ENCODE measurements at regions of chr6 and their contacts with region 1.

Region 1: DNA sequence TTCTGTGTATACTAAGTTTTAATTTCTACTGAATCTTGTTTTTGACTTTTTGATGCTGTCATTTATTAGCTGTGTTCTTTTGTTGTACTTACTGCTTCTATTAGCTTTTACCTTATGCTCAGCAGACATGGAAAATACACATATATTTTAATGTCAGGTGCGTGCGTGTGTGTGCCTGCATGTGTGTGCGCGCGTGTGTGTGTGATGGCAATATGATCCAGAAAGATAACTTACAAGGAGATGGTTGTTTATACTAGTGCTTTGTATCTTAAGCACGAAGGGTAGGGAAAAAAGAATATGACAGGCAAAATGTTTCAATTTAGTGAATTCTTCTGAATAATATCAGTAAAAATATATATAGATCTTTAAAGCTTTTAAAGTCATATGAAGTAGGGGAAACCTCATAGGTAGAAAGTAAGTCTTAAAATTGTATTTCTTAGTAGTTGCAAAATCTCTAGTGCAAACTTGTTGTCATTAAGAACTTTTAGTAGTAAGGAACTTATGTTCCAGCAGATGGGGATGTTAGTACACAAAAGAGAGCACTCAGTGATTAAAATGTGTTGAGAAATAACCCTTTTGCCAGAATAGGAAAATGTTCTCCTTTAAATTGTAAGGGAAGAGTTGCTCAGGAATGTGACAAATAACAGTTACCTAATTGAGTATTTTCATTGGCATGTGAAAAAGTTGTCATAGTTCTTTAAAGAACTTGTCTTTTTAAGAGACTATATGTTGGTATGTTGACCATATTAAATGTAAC is 13.2 kb downstream of the QKI start:
- DNase-seq: no peak
- ATAC-seq: peak; percentile 57
- H3K4me3 ChIP-seq: no peak overlapping the region
- H3K27ac ChIP-seq: no peak overlapping the region
- H3K4me1 ChIP-seq: peaks cover 3 to 11% of the 10 kb centered on the region in 2 donors
- H3K27me3 ChIP-seq: no peaks in the 10 kb centered on the region

Region 2: DNA sequence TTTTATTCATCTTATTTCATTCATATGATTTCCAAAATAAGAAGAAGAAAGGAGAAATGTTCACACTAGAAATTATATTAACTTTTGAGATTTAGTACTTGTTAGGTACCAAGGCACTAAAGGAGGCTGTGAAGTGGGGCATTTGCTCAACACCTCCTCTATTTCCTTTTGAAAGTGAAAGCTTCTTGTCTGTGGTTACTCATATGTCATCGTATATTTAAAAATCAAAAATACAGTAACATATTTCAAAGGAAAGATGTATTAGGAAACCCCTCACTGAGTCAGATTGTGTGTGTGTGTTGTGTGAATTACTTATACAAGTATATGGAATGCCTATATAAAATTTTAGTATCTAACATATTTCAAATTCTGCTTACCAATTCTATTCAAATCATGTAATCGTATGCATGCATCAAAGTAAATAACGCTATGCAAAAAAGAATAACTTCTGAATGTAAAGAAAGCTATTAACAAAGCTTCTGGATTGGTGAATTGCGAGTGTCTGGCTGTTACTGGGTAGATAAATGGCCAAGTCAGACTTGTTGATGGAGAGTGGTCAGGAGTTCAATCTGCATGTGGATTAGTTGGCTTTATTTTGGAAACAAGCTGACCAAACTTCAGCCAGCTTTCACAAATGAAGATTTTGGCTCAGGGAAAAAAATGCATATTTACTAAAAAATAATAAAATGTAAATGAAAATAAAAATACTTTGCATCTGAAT is 629.0 kb before region 1 on chr6:
- intact Hi-C with region 1: no loop called
- DNase-seq: no peak
- ATAC-seq: no peak
- H3K4me3 ChIP-seq: no peak overlapping the region
- H3K27ac ChIP-seq: no peak overlapping the region
- H3K4me1 ChIP-seq: no peaks in the 10 kb centered on the region
- H3K27me3 ChIP-seq: no peaks in the 10 kb centered on the region

Region 3: GRCh38 chr6:163554663-163555062 is 127.0 kb after region 1 on chr6:
- intact Hi-C with region 1: loop called in 1 of 2 experiments (anchors 10 kb)
- DNase-seq: peak; percentile 58 to 80
- ATAC-seq: no peak
- H3K4me3 ChIP-seq: no peak overlapping the region
- H3K27ac ChIP-seq: no peak overlapping the region
- H3K4me1 ChIP-seq: peaks cover 0 to 1% of the 10 kb centered on the region in 2 donors
- H3K27me3 ChIP-seq: no peaks in the 10 kb centered on the region

Region 4: GRCh38 chr6:163579880-163580295 is 152.2 kb after region 1 on chr6:
- intact Hi-C with region 1: no loop called
- DNase-seq: no peak
- ATAC-seq: no peak
- H3K4me3 ChIP-seq: no peak overlapping the region
- H3K27ac ChIP-seq: no peak overlapping the region
- H3K4me1 ChIP-seq: no peaks in the 10 kb centered on the region
- H3K27me3 ChIP-seq: no peaks in the 10 kb centered on the region

Measured in aorta (tissue), 5 donors.